ENCODE measurements at regions of chr1 and their contacts with region 1.

Region 1: GRCh38 chr1:33127001-33127791 is 46.2 kb downstream of the AZIN2 start:
- DNase-seq: peak; percentile 98 to 100 (median 99)
- H3K4me3 ChIP-seq: peak overlapping the region; percentile 83 to 92
- H3K4me3 Mint-ChIP-seq: peak overlapping the region; percentile 92 to 97 (median 95)
- H3K27ac ChIP-seq: peak overlapping the region; percentile 84
- H3K27ac Mint-ChIP-seq: peak overlapping the region; percentile 96 to 99 (median 98)
- H3K4me1 ChIP-seq: peaks cover 34% of the 10 kb centered on the region
- H3K4me1 Mint-ChIP-seq: peaks cover 32 to 58% (median 44%) of the 10 kb centered on the region in 4 donors
- H3K27me3 ChIP-seq: no peaks in the 10 kb centered on the region
- H3K27me3 Mint-ChIP-seq: no peaks in the 10 kb centered on the region

Region 2: DNA sequence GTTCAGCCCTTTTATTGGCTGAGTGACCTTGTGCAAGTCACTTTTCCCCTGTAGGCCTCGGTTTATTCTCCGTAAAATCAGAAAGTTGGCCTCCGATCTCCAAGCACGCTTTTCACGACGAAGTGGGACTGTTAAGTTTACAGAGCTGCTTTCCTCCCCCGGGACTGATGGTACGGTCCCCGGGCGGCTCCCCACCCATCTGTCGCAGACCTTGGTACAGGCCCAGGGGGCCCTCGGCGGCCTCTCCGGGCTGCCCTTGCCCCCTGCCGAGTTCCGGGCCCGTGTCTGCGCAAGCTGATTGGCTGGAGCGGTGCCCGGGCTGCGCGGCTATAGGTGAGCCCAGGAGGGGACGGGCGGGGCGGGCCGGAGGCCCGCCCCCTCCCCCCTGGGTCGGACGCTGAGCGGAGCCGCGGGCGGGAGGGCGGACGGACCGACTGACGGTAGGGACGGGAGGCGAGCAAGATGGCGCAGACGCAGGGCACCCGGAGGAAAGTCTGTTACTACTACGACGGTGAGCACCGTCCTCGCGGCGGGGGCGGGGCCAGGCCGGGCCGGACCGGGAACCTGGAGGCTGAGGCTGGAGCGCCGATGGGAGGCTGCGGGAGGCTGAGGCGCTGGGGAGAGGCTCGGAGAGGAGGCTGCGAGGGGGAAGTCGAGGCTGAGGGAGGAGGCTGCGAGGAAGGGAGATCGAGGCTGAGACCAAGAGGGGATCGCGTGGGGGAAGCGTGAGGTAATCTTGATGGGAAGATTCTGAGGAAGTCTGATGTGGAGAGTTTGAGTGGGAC is 835.3 kb before region 1 on chr1 and contains the start of gene HDAC1:
- CTCF ChIA-PET with region 1: no interaction called
- POLR2A ChIA-PET with region 1: no interaction called
- intact Hi-C with region 1: no loop called
- DNase-seq: peak; percentile 96 to 97 (median 97)
- H3K4me3 ChIP-seq: peak within 1 kb of the TSS; percentile 83 to 93
- H3K4me3 Mint-ChIP-seq: peak within 1 kb of the TSS; percentile 97 to 100 (median 99)
- H3K27ac ChIP-seq: peak within 1 kb of the TSS; percentile 93
- H3K27ac Mint-ChIP-seq: peak within 1 kb of the TSS; percentile 94 to 99 (median 96)
- H3K4me1 ChIP-seq: peaks cover 62% of the 10 kb centered on the region
- H3K4me1 Mint-ChIP-seq: peaks cover 32 to 64% (median 47%) of the 10 kb centered on the region in 4 donors
- H3K27me3 ChIP-seq: no peaks in the 10 kb centered on the region
- H3K27me3 Mint-ChIP-seq: peaks cover 0 to 2% of the 10 kb centered on the region in 2 donors
- total RNA-seq, gene HDAC1: 174 to 190 TPM

Region 3: GRCh38 chr1:32650752-32651460 is 476.3 kb before region 1 on chr1 and contains the start of gene RBBP4:
- CTCF ChIA-PET with region 1: no interaction called
- POLR2A ChIA-PET with region 1: interaction called, 13 read pairs
- intact Hi-C with region 1: loop called (anchors 5 kb)
- DNase-seq: peak; percentile 96 to 99 (median 98)
- H3K4me3 ChIP-seq: peak within 1 kb of the TSS; percentile 91 to 93
- H3K4me3 Mint-ChIP-seq: peak within 1 kb of the TSS; percentile 91 to 98 (median 94)
- H3K27ac ChIP-seq: peak within 1 kb of the TSS; percentile 95
- H3K27ac Mint-ChIP-seq: peak within 1 kb of the TSS; percentile 97 to 100 (median 99)
- H3K4me1 ChIP-seq: peaks cover 63% of the 10 kb centered on the region
- H3K4me1 Mint-ChIP-seq: peaks cover 41 to 80% (median 58%) of the 10 kb centered on the region in 4 donors
- H3K27me3 ChIP-seq: no peaks in the 10 kb centered on the region
- H3K27me3 Mint-ChIP-seq: no peaks in the 10 kb centered on the region
- total RNA-seq, gene RBBP4: 185 to 186 TPM

Region 4: GRCh38 chr1:32964461-32965250 is 162.5 kb before region 1 on chr1 and contains the start of gene RNF19B:
- CTCF ChIA-PET with region 1: no interaction called
- POLR2A ChIA-PET with region 1: interaction called, 29 read pairs
- intact Hi-C with region 1: no loop called
- DNase-seq: peak; percentile 92 to 95 (median 93)
- H3K4me3 ChIP-seq: peak within 1 kb of the TSS; percentile 76 to 79
- H3K4me3 Mint-ChIP-seq: peak within 1 kb of the TSS; percentile 87 to 94 (median 90)
- H3K27ac ChIP-seq: peak within 1 kb of the TSS; percentile 63
- H3K27ac Mint-ChIP-seq: peak within 1 kb of the TSS; percentile 90 to 97 (median 95)
- H3K4me1 ChIP-seq: peaks cover 38% of the 10 kb centered on the region
- H3K4me1 Mint-ChIP-seq: peaks cover 27 to 47% (median 33%) of the 10 kb centered on the region in 4 donors
- H3K27me3 ChIP-seq: no peaks in the 10 kb centered on the region
- H3K27me3 Mint-ChIP-seq: no peaks in the 10 kb centered on the region
- total RNA-seq, gene RNF19B: 28.5 to 30.6 TPM

Region 5: DNA sequence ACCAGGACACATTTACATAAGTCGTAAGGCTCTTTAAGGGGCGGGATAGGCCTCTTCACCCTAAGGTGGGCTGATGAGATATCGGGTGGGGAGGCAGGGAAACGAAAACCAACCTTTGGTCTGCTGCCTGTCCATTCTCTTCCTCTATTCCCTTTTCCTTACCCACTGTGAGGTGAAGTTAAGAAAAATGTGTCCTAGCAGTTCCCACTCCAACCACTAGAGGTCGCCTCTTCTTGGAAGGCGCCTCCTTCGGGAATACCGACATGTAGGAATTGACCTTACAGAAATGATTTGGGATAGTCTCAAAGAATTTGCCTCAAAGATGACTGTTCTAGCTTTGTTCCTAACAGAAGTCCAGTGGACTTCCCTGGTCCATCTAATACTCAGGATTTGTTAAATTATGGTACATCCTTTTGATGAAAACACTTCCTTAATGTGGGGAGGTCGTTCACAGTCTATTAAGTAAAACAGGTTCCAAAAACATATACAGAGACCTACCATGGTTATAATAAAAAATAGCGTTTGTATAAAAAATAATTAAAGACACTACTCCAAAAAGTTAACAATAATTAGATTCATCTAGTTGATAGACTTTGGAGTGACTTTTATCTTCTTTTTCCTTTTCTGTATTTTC is 32.1 kb before region 1 on chr1:
- CTCF ChIA-PET with region 1: interaction called, 42 read pairs
- POLR2A ChIA-PET with region 1: interaction called, 47 read pairs
- intact Hi-C with region 1: loop called (anchors 1 kb)
- DNase-seq: no peak
- H3K4me3 ChIP-seq: no peak overlapping the region
- H3K4me3 Mint-ChIP-seq: peak overlapping the region in 1 of 8 donors; percentile 31
- H3K27ac ChIP-seq: no peak overlapping the region
- H3K27ac Mint-ChIP-seq: peak overlapping the region in 2 of 7 donors; percentile 53 to 55
- H3K4me1 ChIP-seq: peaks cover 42% of the 10 kb centered on the region
- H3K4me1 Mint-ChIP-seq: peaks cover 26 to 58% (median 41%) of the 10 kb centered on the region in 4 donors
- H3K27me3 ChIP-seq: no peaks in the 10 kb centered on the region
- H3K27me3 Mint-ChIP-seq: no peaks in the 10 kb centered on the region

Region 6: DNA sequence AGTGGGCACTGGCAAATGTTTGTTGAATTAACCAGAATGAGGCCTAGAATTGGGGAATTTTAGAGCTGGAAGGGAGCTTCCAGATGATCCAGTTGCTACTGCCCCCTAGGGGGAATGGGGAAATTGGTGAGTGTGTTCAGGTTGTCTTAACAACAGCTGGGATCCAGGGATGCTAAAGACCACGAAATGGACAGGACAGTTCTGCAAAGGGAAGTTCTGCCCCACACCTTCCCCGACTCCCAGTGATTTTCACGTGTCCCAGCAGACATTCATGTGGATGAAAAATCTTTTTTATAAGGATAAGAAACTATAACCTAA is 20.8 kb after region 1 on chr1:
- CTCF ChIA-PET with region 1: interaction called, 13 read pairs
- POLR2A ChIA-PET with region 1: interaction called, 22 read pairs
- intact Hi-C with region 1: no loop called
- DNase-seq: peak in 2 of 5 donors; percentile 17 to 18
- H3K4me3 ChIP-seq: no peak overlapping the region
- H3K4me3 Mint-ChIP-seq: no peak overlapping the region
- H3K27ac ChIP-seq: no peak overlapping the region
- H3K27ac Mint-ChIP-seq: peak overlapping the region in 2 of 7 donors; percentile 57 to 59
- H3K4me1 ChIP-seq: no peaks in the 10 kb centered on the region
- H3K4me1 Mint-ChIP-seq: peaks cover 0 to 6% (median under 1%) of the 10 kb centered on the region in 4 donors
- H3K27me3 ChIP-seq: no peaks in the 10 kb centered on the region
- H3K27me3 Mint-ChIP-seq: no peaks in the 10 kb centered on the region

Region 7: DNA sequence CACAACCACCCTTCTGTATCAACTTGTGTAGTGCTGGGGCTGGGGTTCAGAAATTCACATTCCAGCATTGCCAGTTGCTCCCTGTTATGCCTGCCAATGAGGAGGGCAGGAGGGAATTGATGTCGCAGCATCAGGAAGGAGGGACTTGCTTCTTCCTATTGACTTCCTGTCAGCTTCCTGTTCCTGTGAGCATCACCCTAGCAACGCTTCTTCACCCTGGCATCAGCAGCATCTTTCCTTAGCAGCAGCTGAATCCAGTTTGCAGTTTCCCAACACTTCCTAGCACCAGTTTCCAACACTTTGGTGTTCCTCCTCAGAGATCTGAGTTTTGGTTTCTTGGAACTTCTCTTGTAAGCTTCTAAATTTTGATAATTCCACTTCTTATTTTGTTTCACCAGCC is 63.5 kb after region 1 on chr1:
- CTCF ChIA-PET with region 1: interaction called, 4 read pairs
- POLR2A ChIA-PET with region 1: interaction called, 10 read pairs
- intact Hi-C with region 1: no loop called
- DNase-seq: no peak
- H3K4me3 ChIP-seq: no peak overlapping the region
- H3K4me3 Mint-ChIP-seq: no peak overlapping the region
- H3K27ac ChIP-seq: no peak overlapping the region
- H3K27ac Mint-ChIP-seq: peak overlapping the region in 2 of 7 donors; percentile 5 to 26
- H3K4me1 ChIP-seq: peaks cover 8% of the 10 kb centered on the region
- H3K4me1 Mint-ChIP-seq: peaks cover 5 to 13% (median 9%) of the 10 kb centered on the region in 4 donors
- H3K27me3 ChIP-seq: no peaks in the 10 kb centered on the region
- H3K27me3 Mint-ChIP-seq: peaks cover 15 to 18% of the 10 kb centered on the region in 2 donors

Region 8: GRCh38 chr1:33349778-33350610 is 222.8 kb after region 1 on chr1:
- CTCF ChIA-PET with region 1: no interaction called
- POLR2A ChIA-PET with region 1: interaction called, 17 read pairs
- intact Hi-C with region 1: loop called (anchors 5 kb)
- DNase-seq: peak; percentile 73 to 82 (median 78)
- H3K4me3 ChIP-seq: peak overlapping the region; percentile 82 to 84
- H3K4me3 Mint-ChIP-seq: peak overlapping the region; percentile 87 to 93 (median 91)
- H3K27ac ChIP-seq: peak overlapping the region; percentile 65
- H3K27ac Mint-ChIP-seq: peak overlapping the region; percentile 79 to 95 (median 91)
- H3K4me1 ChIP-seq: peaks cover 47% of the 10 kb centered on the region
- H3K4me1 Mint-ChIP-seq: peaks cover 25 to 54% (median 42%) of the 10 kb centered on the region in 4 donors
- H3K27me3 ChIP-seq: no peaks in the 10 kb centered on the region
- H3K27me3 Mint-ChIP-seq: no peaks in the 10 kb centered on the region

Region 9: GRCh38 chr1:34086561-34086960 is 959.4 kb after region 1 on chr1:
- CTCF ChIA-PET with region 1: no interaction called
- POLR2A ChIA-PET with region 1: no interaction called
- intact Hi-C with region 1: no loop called
- DNase-seq: no peak
- H3K4me3 ChIP-seq: no peak overlapping the region
- H3K4me3 Mint-ChIP-seq: no peak overlapping the region
- H3K27ac ChIP-seq: no peak overlapping the region
- H3K27ac Mint-ChIP-seq: no peak overlapping the region
- H3K4me1 ChIP-seq: no peaks in the 10 kb centered on the region
- H3K4me1 Mint-ChIP-seq: no peaks in the 10 kb centered on the region
- H3K27me3 ChIP-seq: no peaks in the 10 kb centered on the region
- H3K27me3 Mint-ChIP-seq: peaks cover 9% of the 10 kb centered on the region in 2 donors

Measured in CD4-positive, alpha-beta memory T cell (primary cell).